ENCODE measurements at regions of chr9 and their contacts with region 1.

Region 1: DNA sequence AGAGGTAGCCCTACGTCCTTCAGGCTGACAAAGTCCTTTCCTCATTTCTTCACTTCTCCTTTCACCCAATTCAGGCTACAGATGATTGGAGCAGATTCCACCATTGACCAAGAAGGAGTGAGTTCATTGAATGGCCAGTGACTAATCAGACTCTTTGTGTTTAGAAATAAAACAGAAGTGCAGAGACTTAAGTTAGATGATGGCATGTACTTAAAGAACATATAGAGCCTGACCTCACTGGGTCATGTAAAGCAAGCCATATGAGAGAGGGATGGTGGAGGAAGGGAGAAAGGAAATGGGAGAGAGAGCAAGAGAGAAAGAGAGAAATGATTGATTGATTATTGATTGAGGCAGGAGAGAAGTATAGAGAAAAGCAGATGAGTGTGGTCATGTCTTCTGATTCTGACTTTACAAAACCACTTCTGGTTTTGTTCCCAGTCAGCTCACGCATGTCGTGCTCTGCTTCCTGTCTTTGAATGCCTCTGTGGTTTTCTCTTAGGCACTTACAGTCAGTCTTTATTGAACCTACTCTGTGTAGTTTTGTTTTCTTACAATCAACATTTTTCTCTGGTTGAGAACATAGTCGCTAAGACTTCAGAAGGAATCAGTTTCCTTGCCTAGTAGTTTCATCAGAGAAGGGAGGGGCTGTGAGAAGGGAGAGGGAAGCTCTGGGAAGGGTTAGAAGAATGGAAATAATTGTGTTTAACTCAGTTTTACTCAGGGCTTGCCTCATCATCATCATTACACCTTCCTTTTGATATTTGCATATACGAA is 149.2 kb upstream of the KLF9 start:
- DNase-seq: peak in 7 of 9 experiments; percentile 24 to 79 (median 49)
- ATAC-seq: peak; percentile 88
- H3K4me3 ChIP-seq: peak overlapping the region in 1 of 2 experiments; percentile 8
- H3K4me3 Mint-ChIP-seq: peak overlapping the region; percentile 54
- H3K27ac ChIP-seq: peak overlapping the region; percentile 46 to 71
- H3K27ac Mint-ChIP-seq: peak overlapping the region; percentile 96
- H3K4me1 ChIP-seq: peaks cover 43% of the 10 kb centered on the region
- H3K4me1 Mint-ChIP-seq: peaks cover 49% of the 10 kb centered on the region
- H3K27me3 ChIP-seq: no peaks in the 10 kb centered on the region
- H3K27me3 Mint-ChIP-seq: no peaks in the 10 kb centered on the region
- CTCF ChIP-seq: no peak

Region 2: GRCh38 chr9:70258692-70259511 is 304.7 kb before region 1 on chr9 and contains the start of gene SMC5:
- CTCF ChIA-PET with region 1: no interaction called
- POLR2A ChIA-PET with region 1: no interaction called
- intact Hi-C with region 1: loop called (anchors 2 to 10 kb)
- DNase-seq: peak; percentile 76 to 95 (median 87)
- ATAC-seq: peak; percentile 87
- H3K4me3 ChIP-seq: peak within 1 kb of the TSS; percentile 89 to 97
- H3K4me3 Mint-ChIP-seq: peak within 1 kb of the TSS; percentile 95
- H3K27ac ChIP-seq: peak within 1 kb of the TSS; percentile 85 to 94
- H3K27ac Mint-ChIP-seq: peak within 1 kb of the TSS; percentile 96
- H3K4me1 ChIP-seq: peaks cover 54% of the 10 kb centered on the region
- H3K4me1 Mint-ChIP-seq: peaks cover 66% of the 10 kb centered on the region
- H3K27me3 ChIP-seq: no peaks in the 10 kb centered on the region
- H3K27me3 Mint-ChIP-seq: no peaks in the 10 kb centered on the region
- CTCF ChIP-seq: no peak
- total RNA-seq, gene SMC5: 28.6 to 32.0 TPM

Region 3: GRCh38 chr9:70419546-70420266 is 143.9 kb before region 1 on chr9:
- CTCF ChIA-PET with region 1: no interaction called
- POLR2A ChIA-PET with region 1: interaction called, 25 read pairs
- intact Hi-C with region 1: loop called (anchors 2 to 5 kb)
- DNase-seq: peak; percentile 77 to 94 (median 86)
- ATAC-seq: peak; percentile 56
- H3K4me3 ChIP-seq: peak overlapping the region; percentile 73 to 79
- H3K4me3 Mint-ChIP-seq: peak overlapping the region; percentile 95
- H3K27ac ChIP-seq: peak overlapping the region; percentile 95 to 97
- H3K27ac Mint-ChIP-seq: peak overlapping the region; percentile 100
- H3K4me1 ChIP-seq: peaks cover 42% of the 10 kb centered on the region
- H3K4me1 Mint-ChIP-seq: peaks cover 51% of the 10 kb centered on the region
- H3K27me3 ChIP-seq: no peaks in the 10 kb centered on the region
- H3K27me3 Mint-ChIP-seq: no peaks in the 10 kb centered on the region
- CTCF ChIP-seq: no peak

Region 4: GRCh38 chr9:70656281-70656680 is 92.7 kb after region 1 on chr9:
- CTCF ChIA-PET with region 1: no interaction called
- POLR2A ChIA-PET with region 1: no interaction called
- intact Hi-C with region 1: no loop called
- DNase-seq: no peak
- ATAC-seq: no peak
- H3K4me3 ChIP-seq: no peak overlapping the region
- H3K4me3 Mint-ChIP-seq: no peak overlapping the region
- H3K27ac ChIP-seq: no peak overlapping the region
- H3K27ac Mint-ChIP-seq: no peak overlapping the region
- H3K4me1 ChIP-seq: no peaks in the 10 kb centered on the region
- H3K4me1 Mint-ChIP-seq: no peaks in the 10 kb centered on the region
- H3K27me3 ChIP-seq: no peaks in the 10 kb centered on the region
- H3K27me3 Mint-ChIP-seq: peaks cover 17% of the 10 kb centered on the region
- CTCF ChIP-seq: no peak